Stomach (tissue), 19 donors: ENCODE measurements at regions of chr18 and their contacts with region 1.

Region 1: GRCh38 chr18:9971313-9971920 is 57.6 kb downstream of the VAPA start:
- DNase-seq: peak; percentile 84 to 92
- H3K4me3 ChIP-seq: no peak overlapping the region
- H3K27ac ChIP-seq: no peak overlapping the region
- H3K4me1 ChIP-seq: peaks cover 0 to 8% (median 2%) of the 10 kb centered on the region in 4 donors
- H3K27me3 ChIP-seq: peaks cover 0 to 24% (median 0%) of the 10 kb centered on the region in 3 donors
- CTCF ChIP-seq: peak in 6 of 7 experiments; percentile 13 to 89 (median 78)
- EP300 ChIP-seq: no peak
- POLR2A ChIP-seq: no peak

Region 2: DNA sequence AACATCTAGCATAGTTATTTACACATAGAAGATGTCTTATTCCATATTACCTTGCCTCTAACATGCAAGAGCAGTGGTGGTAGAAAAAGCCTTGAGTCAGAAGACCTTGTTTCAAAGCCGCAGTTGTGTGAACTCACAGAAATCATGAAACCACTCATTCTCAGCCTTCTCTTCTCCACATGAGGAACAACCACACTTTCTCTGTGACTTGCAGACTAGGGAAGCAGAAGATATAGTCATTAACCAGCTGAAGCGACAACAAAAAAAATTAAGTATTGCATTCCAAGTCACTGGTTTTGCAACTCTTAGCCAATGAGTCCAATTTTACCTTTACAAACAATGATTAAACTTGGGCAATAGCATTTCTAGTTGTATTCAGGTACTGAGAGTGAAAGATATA is 617.8 kb before region 1 on chr18:
- intact Hi-C with region 1: no loop called
- DNase-seq: no peak
- H3K4me3 ChIP-seq: no peak overlapping the region
- H3K27ac ChIP-seq: no peak overlapping the region
- H3K4me1 ChIP-seq: peaks cover 4 to 36% (median 10%) of the 10 kb centered on the region in 4 donors
- H3K27me3 ChIP-seq: no peaks in the 10 kb centered on the region
- CTCF ChIP-seq: no peak
- EP300 ChIP-seq: no peak
- POLR2A ChIP-seq: no peak

Region 3: GRCh38 chr18:10519999-10520935 is 548.9 kb after region 1 on chr18:
- intact Hi-C with region 1: loop called (anchors 5 kb)
- DNase-seq: peak; percentile 89 to 96
- H3K4me3 ChIP-seq: no peak overlapping the region
- H3K27ac ChIP-seq: peak overlapping the region in 4 of 5 donors; percentile 60 to 79 (median 71)
- H3K4me1 ChIP-seq: peaks cover 16 to 31% (median 27%) of the 10 kb centered on the region in 4 donors
- H3K27me3 ChIP-seq: no peaks in the 10 kb centered on the region
- CTCF ChIP-seq: peak in 5 of 7 experiments; percentile 53 to 81 (median 74)
- EP300 ChIP-seq: no peak
- POLR2A ChIP-seq: no peak